Naive thymus-derived CD4-positive, alpha-beta T cell (primary cell): ENCODE measurements at regions of chr20 and their contacts with region 1.

Region 1: GRCh38 chr20:3854462-3854871 is 7.8 kb downstream of the MAVS start:
- DNase-seq: no peak
- ATAC-seq: peak; percentile 48
- H3K4me3 ChIP-seq: no peak overlapping the region
- H3K4me3 Mint-ChIP-seq: no peak overlapping the region
- H3K27ac ChIP-seq: no peak overlapping the region
- H3K27ac Mint-ChIP-seq: peak overlapping the region in 3 of 9 donors; percentile 33 to 41 (median 33)
- H3K4me1 ChIP-seq: peaks cover 0 to 3% of the 10 kb centered on the region in 2 donors
- H3K4me1 Mint-ChIP-seq: peaks cover 12 to 22% (median 16%) of the 10 kb centered on the region in 7 donors
- H3K27me3 ChIP-seq: no peaks in the 10 kb centered on the region
- H3K27me3 Mint-ChIP-seq: no peaks in the 10 kb centered on the region

Region 2: DNA sequence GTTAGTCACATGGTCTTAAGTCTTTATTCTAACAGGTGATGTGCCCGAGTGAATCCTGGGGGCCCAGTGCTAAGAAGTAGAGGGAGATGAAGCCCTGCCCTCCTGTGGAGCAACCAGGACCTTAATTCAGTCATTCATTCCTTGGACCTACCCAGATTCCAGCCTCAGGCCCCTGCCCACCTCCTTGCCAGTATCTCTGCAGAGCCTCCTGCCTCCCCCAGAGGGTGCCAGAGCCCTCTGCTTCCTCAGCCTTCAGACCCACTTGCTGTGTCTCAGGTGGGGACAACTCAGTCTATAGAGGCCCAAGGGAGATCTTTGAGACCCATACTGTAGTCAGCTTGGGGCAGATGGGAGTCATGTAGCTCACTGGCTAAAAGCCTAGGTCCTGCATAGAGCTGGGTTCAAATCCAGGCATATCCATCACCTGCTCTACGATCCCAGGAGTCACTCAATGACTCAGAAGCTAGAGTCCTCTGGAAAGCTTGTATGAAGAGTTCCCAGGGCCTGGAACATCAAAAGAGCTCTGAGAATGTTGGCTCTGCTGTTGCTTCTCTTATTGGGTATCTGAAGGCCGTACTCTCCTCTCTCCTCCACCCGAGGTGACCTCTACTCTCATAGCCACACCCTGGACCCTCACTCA is 138.2 kb before region 1 on chr20:
- CTCF ChIA-PET with region 1: no interaction called
- POLR2A ChIA-PET with region 1: no interaction called
- intact Hi-C with region 1: loop called in 1 of 2 experiments (anchors 1 kb)
- DNase-seq: peak in 3 of 9 donors; percentile 9 to 17 (median 12)
- ATAC-seq: peak; percentile 41
- H3K4me3 ChIP-seq: no peak overlapping the region
- H3K4me3 Mint-ChIP-seq: no peak overlapping the region
- H3K27ac ChIP-seq: no peak overlapping the region
- H3K27ac Mint-ChIP-seq: no peak overlapping the region
- H3K4me1 ChIP-seq: no peaks in the 10 kb centered on the region
- H3K4me1 Mint-ChIP-seq: peaks cover 0 to 14% (median 0%) of the 10 kb centered on the region in 7 donors
- H3K27me3 ChIP-seq: no peaks in the 10 kb centered on the region
- H3K27me3 Mint-ChIP-seq: peaks cover 12 to 28% (median 19%) of the 10 kb centered on the region in 5 donors